ENCODE measurements at regions of chr5 and their contacts with region 1.

Region 1: DNA sequence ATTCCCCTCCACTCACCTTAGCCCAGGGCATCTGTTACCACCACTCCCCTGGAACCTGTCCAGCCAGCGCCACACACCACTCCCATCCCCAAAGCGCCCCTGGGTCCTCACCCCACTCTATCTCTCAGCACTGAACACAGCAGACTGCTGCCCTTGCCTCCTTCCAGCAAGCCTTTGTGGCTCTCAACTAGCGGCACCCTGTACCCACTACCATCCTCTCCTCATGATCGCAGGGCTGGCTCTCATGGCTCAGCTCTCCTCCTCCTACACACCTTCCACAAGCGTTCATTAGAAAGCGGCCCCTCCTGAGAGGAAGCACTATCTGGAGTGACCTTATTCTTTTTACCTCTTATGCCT is 13.3 kb upstream of the BASP1 start:
- DNase-seq: no peak
- H3K4me3 ChIP-seq: no peak overlapping the region
- H3K27ac ChIP-seq: no peak overlapping the region
- H3K4me1 ChIP-seq: no peaks in the 10 kb centered on the region
- H3K27me3 ChIP-seq: peaks cover 5 to 8% of the 10 kb centered on the region in 2 experiments
- CTCF ChIP-seq: no peak
- POLR2A ChIP-seq: no peak

Region 2: GRCh38 chr5:16160706-16161105 is 1043.4 kb before region 1 on chr5:
- CTCF ChIA-PET with region 1: interaction called, 36 read pairs
- POLR2A ChIA-PET with region 1: no interaction called
- dilution Hi-C with region 1: no loop called
- intact Hi-C with region 1: no loop called
- DNase-seq: peak; percentile 47
- H3K4me3 ChIP-seq: no peak overlapping the region
- H3K27ac ChIP-seq: no peak overlapping the region
- H3K4me1 ChIP-seq: no peaks in the 10 kb centered on the region
- H3K27me3 ChIP-seq: no peaks in the 10 kb centered on the region
- CTCF ChIP-seq: peak; percentile 57 to 67
- POLR2A ChIP-seq: no peak

Region 3: GRCh38 chr5:16245249-16245648 is 958.9 kb before region 1 on chr5:
- CTCF ChIA-PET with region 1: no interaction called
- POLR2A ChIA-PET with region 1: no interaction called
- dilution Hi-C with region 1: no loop called
- intact Hi-C with region 1: no loop called
- DNase-seq: no peak
- H3K4me3 ChIP-seq: no peak overlapping the region
- H3K27ac ChIP-seq: no peak overlapping the region
- H3K4me1 ChIP-seq: no peaks in the 10 kb centered on the region
- H3K27me3 ChIP-seq: no peaks in the 10 kb centered on the region
- CTCF ChIP-seq: no peak
- POLR2A ChIP-seq: no peak

Region 4: GRCh38 chr5:16456103-16456832 is 747.8 kb before region 1 on chr5:
- CTCF ChIA-PET with region 1: interaction called, 5 read pairs
- POLR2A ChIA-PET with region 1: no interaction called
- dilution Hi-C with region 1: no loop called
- intact Hi-C with region 1: loop called (anchors 1 kb)
- DNase-seq: peak; percentile 75
- H3K4me3 ChIP-seq: no peak overlapping the region
- H3K27ac ChIP-seq: peak overlapping the region; percentile 85
- H3K4me1 ChIP-seq: peaks cover 12% of the 10 kb centered on the region
- H3K27me3 ChIP-seq: no peaks in the 10 kb centered on the region
- CTCF ChIP-seq: peak; percentile 56 to 65
- POLR2A ChIP-seq: no peak

Region 5: DNA sequence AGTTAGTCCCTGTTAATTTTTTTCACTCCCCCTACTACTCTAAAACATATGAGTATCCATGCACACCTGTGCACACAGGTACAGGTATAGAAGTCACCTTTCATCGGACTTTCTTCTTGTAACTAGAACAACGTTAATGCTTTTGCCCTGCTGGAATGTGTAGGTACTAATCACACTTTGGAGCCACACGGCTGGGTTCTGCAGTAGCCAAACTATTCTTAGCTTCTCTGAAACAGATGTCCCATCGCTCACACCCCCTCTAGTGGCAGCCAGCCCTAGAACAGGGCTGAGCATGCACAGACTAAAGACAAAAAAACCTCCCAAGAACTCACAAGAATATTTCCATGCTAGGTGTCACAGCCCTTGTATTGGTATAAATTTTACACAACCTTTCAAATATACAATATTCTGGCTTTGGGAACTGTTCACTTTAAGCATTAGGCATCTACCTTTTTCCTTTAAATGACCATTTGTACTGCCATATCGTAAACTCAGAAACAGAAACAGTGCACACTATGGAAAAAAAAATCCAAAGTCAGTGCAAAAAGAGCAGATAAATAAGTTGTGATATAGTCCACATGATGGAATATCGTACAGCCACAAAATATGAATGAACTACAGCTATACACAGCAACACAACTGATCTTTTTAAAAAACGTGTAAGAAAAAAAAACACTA is 651.3 kb before region 1 on chr5:
- CTCF ChIA-PET with region 1: interaction called, 7 read pairs
- POLR2A ChIA-PET with region 1: no interaction called
- dilution Hi-C with region 1: no loop called
- intact Hi-C with region 1: loop called (anchors 2 kb)
- DNase-seq: peak; percentile 52
- H3K4me3 ChIP-seq: no peak overlapping the region
- H3K27ac ChIP-seq: no peak overlapping the region
- H3K4me1 ChIP-seq: no peaks in the 10 kb centered on the region
- H3K27me3 ChIP-seq: peaks cover 4 to 5% of the 10 kb centered on the region in 2 experiments
- CTCF ChIP-seq: peak; percentile 78 to 87
- POLR2A ChIP-seq: no peak

Region 6: GRCh38 chr5:16690243-16690852 is 513.8 kb before region 1 on chr5:
- CTCF ChIA-PET with region 1: interaction called, 17 read pairs
- POLR2A ChIA-PET with region 1: no interaction called
- dilution Hi-C with region 1: loop called (anchors 25 kb)
- intact Hi-C with region 1: loop called (anchors 1 kb)
- DNase-seq: peak; percentile 55
- H3K4me3 ChIP-seq: no peak overlapping the region
- H3K27ac ChIP-seq: no peak overlapping the region
- H3K4me1 ChIP-seq: no peaks in the 10 kb centered on the region
- H3K27me3 ChIP-seq: no peaks in the 10 kb centered on the region
- CTCF ChIP-seq: peak; percentile 63 to 82
- POLR2A ChIP-seq: no peak

Region 7: DNA sequence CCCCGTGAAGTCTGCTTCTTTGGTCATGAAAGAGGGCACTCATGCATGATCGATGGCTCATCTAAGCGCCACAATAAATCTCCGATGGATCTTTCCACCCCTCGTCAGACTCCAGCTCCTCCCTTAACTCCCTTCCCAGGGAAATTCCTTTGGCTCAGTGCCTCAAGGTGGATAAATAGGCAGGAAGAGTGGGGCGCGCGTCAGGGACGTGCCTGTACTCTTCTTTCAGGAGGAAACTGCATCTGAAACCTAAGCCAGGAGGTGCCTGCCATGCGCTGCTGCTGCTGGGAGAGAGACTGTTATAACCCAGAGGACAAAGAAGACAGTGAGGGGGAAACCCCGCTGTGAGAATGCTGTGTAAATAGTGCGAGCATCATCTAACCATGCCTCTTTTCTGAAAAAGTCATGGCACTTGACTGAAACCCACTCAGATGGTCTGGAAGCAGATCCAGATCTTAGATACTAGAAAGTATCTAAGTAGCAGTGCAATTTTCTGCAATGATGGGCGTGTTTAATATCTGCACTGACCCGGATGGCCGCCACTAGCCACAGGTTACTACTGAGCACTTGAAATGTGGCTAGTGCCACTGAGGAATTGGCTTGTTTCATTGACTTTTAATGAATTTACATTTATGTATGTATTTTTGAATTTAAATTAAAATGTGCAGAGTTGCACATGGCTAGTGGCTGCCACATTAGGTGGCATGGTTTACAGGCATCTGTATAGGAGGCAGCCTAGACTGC is 107.0 kb before region 1 on chr5:
- CTCF ChIA-PET with region 1: no interaction called
- POLR2A ChIA-PET with region 1: no interaction called
- dilution Hi-C with region 1: no loop called
- intact Hi-C with region 1: no loop called
- DNase-seq: no peak
- H3K4me3 ChIP-seq: no peak overlapping the region
- H3K27ac ChIP-seq: no peak overlapping the region
- H3K4me1 ChIP-seq: no peaks in the 10 kb centered on the region
- H3K27me3 ChIP-seq: no peaks in the 10 kb centered on the region
- CTCF ChIP-seq: no peak
- POLR2A ChIP-seq: no peak